Activated B cell treated with CpG ODN at 0.5 μM for 24 hours (primary cell): ENCODE measurements at regions of chr16 and their contacts with region 1.

Region 1: GRCh38 chr16:1320658-1321240 is 11.3 kb downstream of the UBE2I start:
- DNase-seq: no peak
- ATAC-seq: no peak
- H3K4me3 Mint-ChIP-seq: no peak overlapping the region
- H3K27ac Mint-ChIP-seq: no peak overlapping the region
- H3K4me1 Mint-ChIP-seq: no peaks in the 10 kb centered on the region
- H3K27me3 Mint-ChIP-seq: no peaks in the 10 kb centered on the region
- CTCF ChIP-seq: no peak

Region 2: GRCh38 chr16:1078579-1079021 is 242.1 kb before region 1 on chr16:
- CTCF ChIA-PET with region 1: no interaction called
- POLR2A ChIA-PET with region 1: no interaction called
- intact Hi-C with region 1: no loop called
- DNase-seq: no peak
- ATAC-seq: no peak
- H3K4me3 Mint-ChIP-seq: no peak overlapping the region
- H3K27ac Mint-ChIP-seq: no peak overlapping the region
- H3K4me1 Mint-ChIP-seq: no peaks in the 10 kb centered on the region
- H3K27me3 Mint-ChIP-seq: peaks cover 15% of the 10 kb centered on the region
- CTCF ChIP-seq: no peak

Region 3: GRCh38 chr16:1741553-1742165 is 420.9 kb after region 1 on chr16:
- CTCF ChIA-PET with region 1: no interaction called
- POLR2A ChIA-PET with region 1: interaction called, 11 read pairs
- intact Hi-C with region 1: no loop called
- DNase-seq: no peak
- ATAC-seq: no peak
- H3K4me3 Mint-ChIP-seq: no peak overlapping the region
- H3K27ac Mint-ChIP-seq: no peak overlapping the region
- H3K4me1 Mint-ChIP-seq: no peaks in the 10 kb centered on the region
- H3K27me3 Mint-ChIP-seq: no peaks in the 10 kb centered on the region
- CTCF ChIP-seq: no peak